Heart left ventricle (tissue), 16 donors: ENCODE measurements at regions of chr6 and their contacts with region 1.

Region 1: GRCh38 chr6:33391278-33391921 is at the start of gene KIFC1:
- DNase-seq: peak; percentile 99
- ATAC-seq: peak; percentile 98 to 99 (median 99)
- H3K4me3 ChIP-seq: peak within 1 kb of the TSS in 11 of 12 donors; percentile 38 to 72 (median 59)
- H3K27ac ChIP-seq: peak within 1 kb of the TSS; percentile 14 to 93 (median 88)
- H3K4me1 ChIP-seq: peaks cover 4 to 19% (median 8%) of the 10 kb centered on the region in 12 donors
- H3K27me3 ChIP-seq: no peaks in the 10 kb centered on the region
- CTCF ChIP-seq: peak; percentile 96 to 100 (median 98)
- POLR2A ChIP-seq: peak in 1 of 2 donors; percentile 32
- total RNA-seq, gene KIFC1: 0.39 to 7.0 (median 1.0) TPM in 6 of 9 donors, not detected in the others

Region 2: DNA sequence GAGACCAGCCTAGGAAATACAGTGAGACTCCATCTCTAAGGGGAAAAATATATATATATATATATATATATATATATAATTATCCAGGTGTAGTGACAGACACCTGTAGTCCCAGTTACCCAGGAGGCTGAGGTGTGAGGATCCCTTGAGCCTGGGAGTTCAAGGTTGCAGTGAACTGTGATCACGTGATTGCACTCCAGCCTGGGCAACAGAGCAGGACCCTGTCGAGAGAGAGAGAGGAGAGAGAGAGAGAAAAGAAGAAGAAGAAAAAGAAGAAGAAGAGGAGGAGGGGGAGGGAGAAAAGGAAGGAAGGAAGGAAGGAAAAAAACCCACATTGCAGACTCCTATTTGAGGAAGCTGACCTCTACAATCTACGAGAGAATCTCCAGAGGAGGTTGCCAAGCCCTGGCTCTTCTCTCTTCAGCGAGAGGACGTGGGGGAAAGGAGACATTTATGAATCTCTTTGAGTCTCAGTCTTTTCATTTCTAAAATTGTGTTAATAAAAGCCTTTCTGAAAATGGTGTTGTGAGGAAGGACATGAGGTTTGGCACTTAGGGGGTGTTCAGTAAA is 248.8 kb before region 1 on chr6:
- intact Hi-C with region 1: no loop called
- DNase-seq: no peak
- ATAC-seq: no peak
- H3K4me3 ChIP-seq: no peak overlapping the region
- H3K27ac ChIP-seq: no peak overlapping the region
- H3K4me1 ChIP-seq: peaks cover 0 to 10% (median 0%) of the 10 kb centered on the region in 12 donors
- H3K27me3 ChIP-seq: peaks cover 0 to 20% (median 4%) of the 10 kb centered on the region in 9 donors
- CTCF ChIP-seq: no peak
- POLR2A ChIP-seq: no peak

Region 3: DNA sequence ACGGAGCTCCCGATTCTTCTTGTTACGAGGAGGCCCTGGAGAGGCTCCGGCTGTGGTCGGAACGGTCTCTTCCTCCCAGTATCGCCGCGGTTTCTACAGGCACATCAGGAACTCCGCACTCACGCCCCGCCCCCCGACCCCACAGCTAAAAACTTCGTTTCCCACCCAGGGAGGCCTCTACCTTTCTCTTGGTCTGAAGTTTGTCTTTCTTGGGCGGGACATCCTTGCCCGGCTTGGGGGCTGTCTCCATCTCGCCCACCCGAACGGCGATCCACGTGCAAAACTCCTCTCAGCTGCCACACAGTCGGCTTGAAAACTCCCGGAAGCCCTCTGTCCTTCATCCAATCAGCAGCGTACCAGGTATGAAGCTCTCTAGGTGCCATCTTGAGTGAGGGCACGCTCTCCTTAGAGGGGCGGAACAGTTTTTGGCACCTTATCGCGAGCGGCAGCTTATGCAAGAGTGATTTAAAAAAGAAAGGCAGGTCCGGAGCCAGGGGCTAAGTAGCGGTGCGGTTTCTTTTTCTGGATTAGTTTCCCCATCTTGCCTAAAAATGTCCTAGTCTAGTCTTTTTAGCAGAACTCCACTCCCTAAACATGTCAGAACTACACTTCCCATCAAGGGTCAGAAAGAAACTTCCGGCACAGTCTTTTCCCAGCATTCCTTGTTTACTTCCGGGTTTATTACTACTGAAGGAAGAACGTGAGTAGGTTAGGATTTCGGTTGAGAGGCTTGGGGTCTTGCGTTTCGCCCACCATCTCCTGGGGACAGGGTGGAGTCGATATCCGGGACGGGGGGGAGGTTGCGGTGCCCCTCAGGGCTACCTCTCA is 102.3 kb before region 1 on chr6 and contains the starts of genes PFDN6 and WDR46:
- intact Hi-C with region 1: no loop called
- DNase-seq: peak; percentile 74 to 87 (median 86)
- ATAC-seq: peak; percentile 92 to 98 (median 95)
- H3K4me3 ChIP-seq: peak within 1 kb of the TSS; percentile 60 to 90 (median 73)
- H3K27ac ChIP-seq: peak within 1 kb of the TSS; percentile 49 to 89 (median 81)
- H3K4me1 ChIP-seq: peaks cover 0 to 25% (median 18%) of the 10 kb centered on the region in 12 donors
- H3K27me3 ChIP-seq: no peaks in the 10 kb centered on the region
- CTCF ChIP-seq: no peak
- POLR2A ChIP-seq: peak in 1 of 2 donors; percentile 32
- total RNA-seq, gene PFDN6: 29.2 to 62.2 (median 43.2) TPM
- total RNA-seq, gene WDR46: 12.2 to 39.5 (median 21.4) TPM

Region 4: DNA sequence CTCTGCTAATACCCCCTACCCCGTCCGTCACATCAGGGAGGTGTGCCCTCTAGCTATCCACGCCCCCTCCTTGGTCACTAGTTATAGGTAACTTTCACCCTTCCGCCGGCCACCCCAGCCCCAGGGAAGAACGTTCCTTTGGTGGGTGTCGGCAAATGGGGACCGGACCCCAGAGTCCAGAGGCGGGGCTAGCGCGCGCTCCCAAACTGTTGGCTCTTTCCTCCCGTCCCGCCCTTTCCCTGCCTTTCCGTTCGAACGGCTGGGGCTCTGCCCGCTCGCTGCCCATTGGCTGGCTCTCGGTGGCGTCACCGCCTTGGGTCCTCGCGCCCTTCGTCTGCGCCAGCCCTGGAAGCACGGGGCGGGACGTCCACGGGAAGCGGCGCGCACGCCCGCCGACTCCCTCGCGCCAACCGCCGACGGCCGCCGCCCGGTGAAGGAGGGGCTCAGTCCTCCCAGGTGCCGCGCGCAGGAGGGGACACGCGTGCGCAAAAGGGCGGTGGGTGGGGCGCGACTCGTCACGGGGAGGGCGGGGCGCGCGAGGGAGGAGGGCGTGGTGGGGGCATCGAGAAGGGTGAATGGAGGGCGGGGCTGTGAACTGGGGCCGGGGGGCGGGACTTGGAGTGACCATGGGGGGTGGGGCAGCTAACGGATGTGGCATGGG is 18.8 kb after region 1 on chr6:
- intact Hi-C with region 1: loop called in 6 of 10 experiments (anchors 1 to 2 kb)
- DNase-seq: peak; percentile 98 to 99 (median 99)
- ATAC-seq: peak; percentile 85 to 92 (median 91)
- H3K4me3 ChIP-seq: peak overlapping the region; percentile 68 to 100 (median 94)
- H3K27ac ChIP-seq: peak overlapping the region; percentile 94 to 100 (median 99)
- H3K4me1 ChIP-seq: peaks cover 0 to 24% (median 14%) of the 10 kb centered on the region in 12 donors
- H3K27me3 ChIP-seq: no peaks in the 10 kb centered on the region
- CTCF ChIP-seq: no peak
- POLR2A ChIP-seq: peak in 1 of 2 donors; percentile 64

Region 5: GRCh38 chr6:33417903-33418689 is 26.7 kb after region 1 on chr6 and contains the start of gene CUTA:
- intact Hi-C with region 1: loop called in 1 of 10 experiments (anchors 1 kb)
- DNase-seq: peak; percentile 100
- ATAC-seq: peak; percentile 94 to 97 (median 96)
- H3K4me3 ChIP-seq: peak within 1 kb of the TSS; percentile 30 to 80 (median 65)
- H3K27ac ChIP-seq: peak within 1 kb of the TSS; percentile 83 to 97 (median 92)
- H3K4me1 ChIP-seq: peaks cover 0 to 40% (median 25%) of the 10 kb centered on the region in 12 donors
- H3K27me3 ChIP-seq: no peaks in the 10 kb centered on the region
- CTCF ChIP-seq: peak in 11 of 12 donors; percentile 23 to 64 (median 50)
- POLR2A ChIP-seq: peak in 1 of 2 donors; percentile 63
- total RNA-seq, gene CUTA: 99.3 to 142 (median 120) TPM

Region 6: GRCh38 chr6:33425668-33426577 is 34.5 kb after region 1 on chr6:
- intact Hi-C with region 1: loop called in 5 of 10 experiments (anchors 1 to 5 kb)
- DNase-seq: peak; percentile 90 to 92 (median 90)
- ATAC-seq: peak; percentile 73 to 85 (median 82)
- H3K4me3 ChIP-seq: peak overlapping the region; percentile 40 to 76 (median 68)
- H3K27ac ChIP-seq: peak overlapping the region; percentile 82 to 98 (median 94)
- H3K4me1 ChIP-seq: peaks cover 0 to 60% (median 46%) of the 10 kb centered on the region in 12 donors
- H3K27me3 ChIP-seq: no peaks in the 10 kb centered on the region
- CTCF ChIP-seq: peak; percentile 29 to 76 (median 60)
- POLR2A ChIP-seq: no peak

Region 7: GRCh38 chr6:33437666-33438065 is 46.3 kb after region 1 on chr6:
- intact Hi-C with region 1: no loop called
- DNase-seq: peak in 1 of 5 donors; percentile 9
- ATAC-seq: no peak
- H3K4me3 ChIP-seq: no peak overlapping the region
- H3K27ac ChIP-seq: no peak overlapping the region
- H3K4me1 ChIP-seq: peaks cover 0 to 19% (median 6%) of the 10 kb centered on the region in 12 donors
- H3K27me3 ChIP-seq: no peaks in the 10 kb centered on the region
- CTCF ChIP-seq: no peak
- POLR2A ChIP-seq: no peak

Region 8: GRCh38 chr6:33454009-33454946 is 62.9 kb after region 1 on chr6 and contains the start of gene ZBTB9:
- intact Hi-C with region 1: loop called in 1 of 10 experiments (anchors 1 kb)
- DNase-seq: peak; percentile 96 to 98 (median 97)
- ATAC-seq: peak; percentile 99 to 100 (median 100)
- H3K4me3 ChIP-seq: peak within 1 kb of the TSS; percentile 71 to 99 (median 88)
- H3K27ac ChIP-seq: peak within 1 kb of the TSS; percentile 21 to 88 (median 86)
- H3K4me1 ChIP-seq: peaks cover 0 to 39% (median 17%) of the 10 kb centered on the region in 12 donors
- H3K27me3 ChIP-seq: no peaks in the 10 kb centered on the region
- CTCF ChIP-seq: no peak
- POLR2A ChIP-seq: peak; percentile 83 to 96
- total RNA-seq, gene ZBTB9: 2.5 to 6.4 (median 4.7) TPM

Region 9: DNA sequence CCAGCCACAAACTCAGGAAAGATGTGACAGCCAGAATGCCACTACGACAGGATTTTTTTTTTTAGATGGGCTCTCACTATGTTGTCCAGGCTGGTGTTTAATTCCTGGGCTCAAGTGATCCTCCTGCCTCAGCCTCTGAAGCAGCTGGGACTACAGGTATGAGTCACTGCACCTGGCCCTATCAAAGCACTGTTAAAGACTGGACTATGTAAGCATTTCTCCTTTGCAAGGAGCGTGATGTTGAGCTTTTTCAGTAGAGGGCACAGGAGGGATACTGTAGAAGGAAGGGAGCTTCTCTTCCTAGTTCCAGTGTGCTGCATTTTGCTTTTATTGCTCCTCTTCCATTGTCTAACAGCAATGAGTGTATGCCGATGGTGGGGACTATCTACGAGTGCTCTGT is 98.8 kb after region 1 on chr6:
- intact Hi-C with region 1: no loop called
- DNase-seq: no peak
- ATAC-seq: peak in 2 of 4 donors; percentile 7 to 13
- H3K4me3 ChIP-seq: no peak overlapping the region
- H3K27ac ChIP-seq: no peak overlapping the region
- H3K4me1 ChIP-seq: no peaks in the 10 kb centered on the region
- H3K27me3 ChIP-seq: peaks cover 0 to 3% (median 0%) of the 10 kb centered on the region in 9 donors
- CTCF ChIP-seq: no peak
- POLR2A ChIP-seq: no peak